ENCODE measurements at regions of chr4 and their contacts with region 1.

Region 1: DNA sequence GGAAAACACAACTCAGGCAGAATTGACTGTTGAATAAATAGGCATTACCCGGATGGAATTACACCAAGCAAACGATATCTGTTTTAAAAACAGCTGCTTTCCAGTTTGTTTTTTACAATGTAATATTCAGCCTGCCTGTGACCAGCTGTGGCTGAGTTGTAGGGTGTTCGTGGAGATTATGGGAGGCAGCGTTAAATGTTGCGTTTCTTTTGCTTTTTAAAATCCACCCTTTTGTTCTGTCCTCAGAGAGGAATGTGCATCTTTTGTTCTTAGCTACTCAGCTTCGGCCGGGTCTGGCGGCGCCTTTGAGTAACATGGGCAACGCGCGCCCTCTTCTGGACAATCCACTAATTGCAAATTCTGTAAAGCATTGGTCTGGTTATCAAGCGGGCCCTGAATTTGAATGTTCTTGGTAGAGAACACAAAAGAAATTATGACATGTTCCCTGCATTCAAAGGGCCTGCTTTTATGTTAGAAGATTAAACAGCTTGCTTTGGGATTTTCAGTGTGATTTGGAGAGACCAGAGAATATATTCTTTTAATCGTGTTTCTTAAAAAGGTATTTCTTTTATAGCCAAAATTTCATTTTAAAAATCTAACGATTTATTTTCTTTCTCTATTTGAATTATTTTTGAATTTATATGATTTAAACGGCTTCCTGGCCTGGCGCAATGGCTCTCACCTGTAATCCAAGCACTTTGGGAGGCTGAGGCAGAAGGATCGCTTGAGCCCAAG is 76.3 kb upstream of the TRIM2 start:
- DNase-seq: peak; percentile 95
- H3K4me3 Mint-ChIP-seq: no peak overlapping the region
- H3K27ac Mint-ChIP-seq: no peak overlapping the region
- H3K4me1 Mint-ChIP-seq: peaks cover 9% of the 10 kb centered on the region
- H3K27me3 Mint-ChIP-seq: no peaks in the 10 kb centered on the region

Region 2: GRCh38 chr4:152408514-152409327 is 719.2 kb before region 1 on chr4:
- CTCF ChIA-PET with region 1: no interaction called
- intact Hi-C with region 1: loop called (anchors 2 kb)
- DNase-seq: peak; percentile 35
- H3K4me3 Mint-ChIP-seq: no peak overlapping the region
- H3K27ac Mint-ChIP-seq: no peak overlapping the region
- H3K4me1 Mint-ChIP-seq: peaks cover 7% of the 10 kb centered on the region
- H3K27me3 Mint-ChIP-seq: no peaks in the 10 kb centered on the region

Region 3: DNA sequence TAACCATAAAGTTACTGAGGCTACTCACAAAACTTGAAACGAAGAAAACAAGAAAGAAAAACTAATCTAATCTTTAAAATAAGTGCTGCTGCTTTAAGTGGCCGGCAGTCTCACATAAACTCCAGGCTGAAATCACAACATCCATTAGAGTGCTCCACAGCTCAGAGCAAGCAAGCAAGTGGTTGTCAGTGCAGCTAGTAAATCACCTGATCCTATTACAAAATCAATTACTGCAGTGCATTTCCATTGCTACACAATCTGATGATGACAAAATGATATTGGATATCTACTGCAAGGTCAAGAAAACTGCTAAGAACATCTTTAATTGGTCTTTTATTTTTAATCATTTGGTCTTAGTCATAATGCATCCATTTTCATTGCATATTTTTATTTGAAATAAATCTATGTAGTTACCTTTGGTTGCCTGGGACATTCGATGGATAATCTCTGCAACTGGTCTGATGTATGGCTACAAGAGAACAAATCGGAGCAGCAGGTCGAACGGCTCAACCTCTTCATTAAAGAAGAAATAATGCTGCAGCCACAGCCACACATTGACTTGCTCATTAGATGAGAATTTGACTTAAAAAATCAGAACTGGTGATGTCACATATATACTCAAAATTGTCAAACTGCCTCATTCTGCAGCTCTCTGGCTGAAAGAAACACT is 679.8 kb before region 1 on chr4:
- CTCF ChIA-PET with region 1: no interaction called
- intact Hi-C with region 1: no loop called
- DNase-seq: no peak
- H3K4me3 Mint-ChIP-seq: no peak overlapping the region
- H3K27ac Mint-ChIP-seq: no peak overlapping the region
- H3K4me1 Mint-ChIP-seq: peaks cover 8% of the 10 kb centered on the region
- H3K27me3 Mint-ChIP-seq: no peaks in the 10 kb centered on the region

Region 4: GRCh38 chr4:152850377-152850776 is 277.6 kb before region 1 on chr4:
- CTCF ChIA-PET with region 1: interaction called, 46 read pairs
- intact Hi-C with region 1: loop called (anchors 1 kb)
- DNase-seq: peak; percentile 74
- H3K4me3 Mint-ChIP-seq: no peak overlapping the region
- H3K27ac Mint-ChIP-seq: no peak overlapping the region
- H3K4me1 Mint-ChIP-seq: peaks cover 16% of the 10 kb centered on the region
- H3K27me3 Mint-ChIP-seq: no peaks in the 10 kb centered on the region

Region 5: GRCh38 chr4:153089742-153090141 is 38.2 kb before region 1 on chr4:
- CTCF ChIA-PET with region 1: interaction called, 376 read pairs
- intact Hi-C with region 1: no loop called
- DNase-seq: no peak
- H3K4me3 Mint-ChIP-seq: no peak overlapping the region
- H3K27ac Mint-ChIP-seq: no peak overlapping the region
- H3K4me1 Mint-ChIP-seq: peaks cover 24% of the 10 kb centered on the region
- H3K27me3 Mint-ChIP-seq: no peaks in the 10 kb centered on the region

Region 6: GRCh38 chr4:153318696-153319320 is 190.9 kb after region 1 on chr4:
- CTCF ChIA-PET with region 1: interaction called, 12 read pairs
- intact Hi-C with region 1: no loop called
- DNase-seq: peak; percentile 50
- H3K4me3 Mint-ChIP-seq: no peak overlapping the region
- H3K27ac Mint-ChIP-seq: no peak overlapping the region
- H3K4me1 Mint-ChIP-seq: no peaks in the 10 kb centered on the region
- H3K27me3 Mint-ChIP-seq: no peaks in the 10 kb centered on the region

Measured in activated naive CD4-positive, alpha-beta T cell treated with anti-CD3 and anti-CD28 coated beads for 36 hours (primary cell).